OCI-LY7 (cell line): ENCODE measurements at regions of chr12 and their contacts with region 1.

Region 1: GRCh38 chr12:14272956-14273907 is 92.2 kb upstream of the ATF7IP start:
- DNase-seq: peak; percentile 50
- H3K4me3 ChIP-seq: peak overlapping the region; percentile 16
- H3K27ac ChIP-seq: peak overlapping the region; percentile 51
- H3K4me1 ChIP-seq: peaks cover 49% of the 10 kb centered on the region
- CTCF ChIP-seq: no peak

Region 2: DNA sequence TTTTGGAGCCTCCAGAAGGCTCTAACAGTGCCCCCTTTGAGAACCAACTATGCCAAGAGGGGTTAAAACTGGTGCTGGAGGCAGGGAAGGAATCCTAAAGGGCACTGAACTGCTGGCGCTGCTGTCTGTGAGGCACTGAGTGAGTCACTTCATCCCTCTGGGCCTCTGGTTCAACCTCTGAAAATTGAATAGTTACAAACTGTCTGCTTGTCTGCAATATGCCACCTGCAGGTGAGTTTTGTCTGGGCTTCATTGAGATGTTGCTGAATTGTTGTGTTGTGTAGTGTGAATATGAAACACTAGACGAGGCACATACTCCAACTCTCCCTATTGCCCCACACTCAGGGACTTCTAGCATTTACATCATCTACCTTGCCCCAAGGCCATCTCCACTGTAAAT is 359.9 kb before region 1 on chr12:
- CTCF ChIA-PET with region 1: no interaction called
- POLR2A ChIA-PET with region 1: no interaction called
- intact Hi-C with region 1: no loop called
- DNase-seq: no peak
- H3K4me3 ChIP-seq: no peak overlapping the region
- H3K27ac ChIP-seq: no peak overlapping the region
- H3K4me1 ChIP-seq: no peaks in the 10 kb centered on the region
- CTCF ChIP-seq: no peak

Region 3: GRCh38 chr12:14207905-14208551 is 65.2 kb before region 1 on chr12:
- CTCF ChIA-PET with region 1: no interaction called
- POLR2A ChIA-PET with region 1: no interaction called
- intact Hi-C with region 1: no loop called
- DNase-seq: no peak
- H3K4me3 ChIP-seq: no peak overlapping the region
- H3K27ac ChIP-seq: no peak overlapping the region
- H3K4me1 ChIP-seq: no peaks in the 10 kb centered on the region
- CTCF ChIP-seq: no peak

Region 4: DNA sequence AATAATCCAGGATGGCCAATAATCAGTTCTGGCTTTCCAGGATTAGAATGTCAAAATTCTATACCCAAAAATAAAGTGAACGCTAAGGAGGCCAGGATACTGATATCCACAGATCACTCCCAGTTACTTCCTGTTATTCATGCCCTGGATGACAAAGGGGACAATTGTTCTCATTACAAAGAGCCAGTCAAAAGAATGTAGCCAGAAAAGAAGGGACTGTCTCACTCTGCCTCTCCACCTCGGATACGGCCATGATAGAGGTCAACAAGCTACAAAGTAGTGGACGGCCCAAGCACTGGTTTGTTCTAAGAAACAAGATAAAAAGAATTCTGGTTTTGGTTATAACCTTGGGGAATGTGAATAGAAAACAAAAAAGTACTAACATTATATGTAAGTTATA is 23.9 kb before region 1 on chr12:
- CTCF ChIA-PET with region 1: interaction called, 11 read pairs
- POLR2A ChIA-PET with region 1: interaction called, 22 read pairs
- intact Hi-C with region 1: no loop called
- DNase-seq: no peak
- H3K4me3 ChIP-seq: no peak overlapping the region
- H3K27ac ChIP-seq: no peak overlapping the region
- H3K4me1 ChIP-seq: peaks cover 39% of the 10 kb centered on the region
- CTCF ChIP-seq: no peak

Region 5: DNA sequence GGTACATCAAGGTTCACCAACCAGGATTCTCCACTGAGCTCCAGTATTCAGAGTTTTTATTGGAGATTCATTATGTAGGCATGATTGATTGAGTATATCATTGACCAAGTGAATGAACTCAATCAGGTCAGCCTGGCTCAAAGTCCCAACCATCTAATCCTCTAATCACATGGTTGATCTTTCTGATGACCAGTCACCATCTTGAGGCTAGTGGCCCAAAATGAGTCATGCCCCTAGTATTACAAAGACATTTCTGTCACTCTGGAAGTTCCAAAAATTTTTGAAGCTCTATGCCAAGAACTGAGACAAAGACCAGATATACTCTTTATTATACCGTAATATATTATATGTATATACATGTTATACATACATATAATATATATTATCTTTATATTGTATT is 16.4 kb after region 1 on chr12:
- CTCF ChIA-PET with region 1: interaction called, 8 read pairs
- POLR2A ChIA-PET with region 1: interaction called, 29 read pairs
- intact Hi-C with region 1: no loop called
- DNase-seq: no peak
- H3K4me3 ChIP-seq: no peak overlapping the region
- H3K27ac ChIP-seq: no peak overlapping the region
- H3K4me1 ChIP-seq: peaks cover 19% of the 10 kb centered on the region
- CTCF ChIP-seq: no peak